ENCODE measurements at regions of chr9 and their contacts with region 1.

Region 1: GRCh38 chr9:19690128-19690527 is 98.7 kb downstream of the SLC24A2 start:
- DNase-seq: no peak
- H3K4me3 ChIP-seq: no peak overlapping the region
- CTCF ChIP-seq: no peak
- POLR2A ChIP-seq: no peak

Region 2: DNA sequence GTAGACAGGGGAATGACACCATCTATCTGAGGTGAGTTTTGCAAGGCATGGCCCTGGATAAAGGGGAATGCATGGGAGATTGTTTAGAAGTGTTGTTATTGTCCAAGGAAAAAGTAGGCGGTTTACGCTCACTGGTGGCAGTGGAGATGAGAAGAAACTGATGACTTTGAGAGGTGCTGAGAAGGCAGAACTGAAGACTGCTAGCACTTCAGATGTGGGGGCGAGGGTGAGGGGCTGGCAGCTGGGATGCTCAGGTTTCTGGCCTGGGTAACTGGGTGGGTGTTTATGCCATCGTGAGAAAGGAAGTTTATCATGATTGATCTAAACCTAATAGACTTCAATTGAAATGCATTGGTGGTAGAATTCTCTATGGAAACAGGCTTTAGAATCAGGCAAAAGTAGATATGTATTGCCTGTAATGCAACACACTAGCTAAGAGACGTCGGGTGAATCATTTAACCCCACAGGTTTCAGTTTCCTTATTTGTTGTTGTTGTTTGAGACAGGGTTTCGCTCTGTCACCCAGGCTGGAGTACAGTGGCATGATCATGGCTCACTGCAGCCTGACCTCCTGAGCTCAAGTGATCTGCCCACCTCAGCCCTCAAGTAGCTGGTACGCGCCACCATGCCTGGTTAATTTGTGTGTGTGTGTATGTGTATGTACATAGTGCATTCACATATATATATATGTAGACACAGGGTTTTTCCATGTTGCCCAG is 24.8 kb before region 1 on chr9:
- intact Hi-C with region 1: loop called (anchors 1 kb)
- DNase-seq: no peak
- H3K4me3 ChIP-seq: no peak overlapping the region
- CTCF ChIP-seq: no peak
- POLR2A ChIP-seq: no peak

Region 3: DNA sequence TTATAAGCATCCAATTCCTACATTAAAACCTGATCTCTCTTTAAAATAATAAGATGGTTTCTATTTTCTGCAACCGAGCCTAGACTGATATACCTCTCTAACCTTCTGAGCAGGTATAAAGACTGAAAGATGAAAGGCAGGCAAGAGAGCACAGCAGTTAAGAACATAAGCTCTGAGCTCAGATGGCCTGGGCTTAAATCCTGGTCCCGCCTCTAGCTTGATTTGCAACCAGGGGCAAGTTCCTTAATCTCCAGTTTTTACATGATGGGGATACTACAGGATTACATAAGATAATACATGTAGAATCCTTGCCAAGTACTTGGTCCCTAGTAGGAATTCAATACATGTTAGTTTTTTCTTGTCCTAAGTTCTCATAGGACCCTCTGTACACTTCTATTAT is 64.8 kb after region 1 on chr9:
- intact Hi-C with region 1: no loop called
- DNase-seq: no peak
- H3K4me3 ChIP-seq: no peak overlapping the region
- CTCF ChIP-seq: no peak
- POLR2A ChIP-seq: no peak

Measured in lower leg skin (tissue), 4 donors.